ENCODE measurements at regions of chr13 and their contacts with region 1.

Region 1: GRCh38 chr13:19782049-19782726 is 557 bp downstream of the PSPC1 start:
- DNase-seq: peak; percentile 39 to 72 (median 52)
- H3K4me3 ChIP-seq: peak overlapping the region; percentile 62 to 100 (median 94)
- H3K27ac ChIP-seq: peak overlapping the region; percentile 68 to 98 (median 93)
- H3K27me3 ChIP-seq: no peaks in the 10 kb centered on the region
- CTCF ChIP-seq: peak in 3 of 56 donors; percentile 9 to 15 (median 10)

Region 2: DNA sequence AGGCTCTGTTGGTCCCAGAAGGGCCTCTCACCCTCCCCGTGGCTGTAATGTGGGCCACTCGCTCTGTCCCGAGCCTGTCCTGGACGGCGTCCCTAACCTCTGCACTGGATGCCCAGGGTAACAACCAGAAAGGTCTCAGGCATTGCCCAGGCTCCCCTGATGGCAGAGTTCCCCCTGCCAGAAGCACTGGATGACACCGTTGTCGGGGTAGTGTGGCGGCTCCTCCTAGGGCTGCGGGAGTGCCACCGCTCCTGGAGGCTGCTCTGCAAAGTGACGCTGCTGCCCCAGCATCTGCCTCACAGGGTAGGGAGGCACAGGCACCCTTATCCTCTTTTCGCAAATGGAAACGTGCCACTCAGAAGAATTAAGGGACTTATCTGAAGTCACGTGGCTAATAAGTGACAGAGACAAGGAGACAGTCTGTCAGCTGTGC is 116.7 kb before region 1 on chr13:
- intact Hi-C with region 1: no loop called
- DNase-seq: peak in 1 of 10 donors; percentile 43
- H3K4me3 ChIP-seq: no peak overlapping the region
- H3K27ac ChIP-seq: peak overlapping the region in 38 of 59 donors; percentile 2 to 75 (median 42)
- H3K27me3 ChIP-seq: no peaks in the 10 kb centered on the region
- CTCF ChIP-seq: no peak

Region 3: DNA sequence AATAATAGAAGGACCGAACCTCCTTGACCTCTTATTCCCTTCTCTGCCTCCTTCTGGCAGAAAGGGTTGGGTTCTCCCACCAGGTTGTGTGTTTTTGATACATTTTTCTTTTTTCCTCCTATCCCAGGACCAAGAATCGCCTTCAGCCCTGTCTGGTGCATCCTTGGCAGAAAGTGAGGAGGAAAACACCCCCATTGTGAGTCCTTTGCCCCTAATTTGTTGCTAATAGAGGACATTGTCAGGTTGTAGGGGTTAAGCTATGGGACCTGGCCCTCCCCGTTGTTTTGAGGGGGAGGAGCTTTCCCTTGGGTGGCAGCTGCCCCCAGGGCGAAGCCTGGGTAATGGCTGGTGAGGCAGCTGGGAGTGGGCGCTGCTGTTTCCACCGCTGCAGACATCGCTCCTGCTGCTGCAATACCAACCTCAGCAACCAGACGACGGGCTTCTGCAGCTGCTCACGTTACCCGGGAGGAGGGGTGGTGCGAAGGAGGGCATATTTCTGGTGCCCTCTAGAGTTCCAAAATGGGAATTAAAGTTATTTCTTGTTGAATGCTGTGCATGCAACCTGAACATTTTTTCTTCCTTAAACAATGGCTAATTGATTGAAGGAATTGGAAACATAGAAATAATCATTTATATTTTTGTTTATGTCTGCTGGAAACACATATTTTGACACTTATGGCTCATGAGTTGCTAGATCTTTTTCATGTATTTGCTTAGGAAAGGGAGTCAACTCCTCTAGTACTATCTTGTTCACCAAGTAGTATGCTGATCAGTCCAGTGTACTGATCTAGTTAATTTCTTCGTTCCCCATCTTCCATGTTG is 177.9 kb after region 1 on chr13:
- intact Hi-C with region 1: loop called (anchors 2 kb)
- DNase-seq: peak; percentile 63 to 91 (median 84)
- H3K4me3 ChIP-seq: peak overlapping the region; percentile 62 to 95 (median 84)
- H3K27ac ChIP-seq: peak overlapping the region; percentile 89 to 100 (median 99)
- H3K27me3 ChIP-seq: no peaks in the 10 kb centered on the region
- CTCF ChIP-seq: peak; percentile 75 to 96 (median 91)

Region 4: DNA sequence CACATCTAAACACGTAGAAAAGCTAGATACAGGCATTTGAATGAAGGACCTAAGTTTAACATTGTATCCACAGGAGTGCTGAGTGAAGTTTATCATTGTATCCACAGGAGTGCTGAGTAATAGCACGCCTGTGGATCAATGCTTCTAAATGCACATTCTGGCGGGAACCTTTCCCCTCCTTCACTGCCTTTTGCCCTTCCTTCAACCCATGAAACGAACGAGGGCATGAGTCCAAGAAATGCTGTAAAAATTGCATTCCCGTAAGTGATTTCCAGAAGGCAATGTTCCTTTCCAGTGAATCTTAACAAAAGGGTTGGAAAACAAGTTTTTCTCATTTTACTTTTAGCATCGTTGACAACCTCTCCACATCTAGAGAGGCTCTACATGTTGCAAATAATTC is 1588.8 kb after region 1 on chr13:
- intact Hi-C with region 1: no loop called
- DNase-seq: no peak
- H3K4me3 ChIP-seq: no peak overlapping the region
- H3K27ac ChIP-seq: peak overlapping the region in 8 of 59 donors; percentile 16 to 57 (median 34)
- H3K27me3 ChIP-seq: no peaks in the 10 kb centered on the region
- CTCF ChIP-seq: no peak

Measured in dorsolateral prefrontal cortex (tissue), 120 donors.